ENCODE measurements at regions of chr14 and their contacts with region 1.

Region 1: GRCh38 chr14:95774265-95775160 is 60.6 kb upstream of the TCL1A start:
- DNase-seq: peak; percentile 46 to 57
- ATAC-seq: peak; percentile 70 to 80; a peak in 3 of 6 replicates
- H3K4me3 ChIP-seq: no peak overlapping the region
- H3K27ac ChIP-seq: no peak overlapping the region
- H3K4me1 ChIP-seq: no peaks in the 10 kb centered on the region
- CTCF ChIP-seq: peak; percentile 76
- EP300 ChIP-seq: no peak
- POLR2A ChIP-seq: no peak
- RAD21 ChIP-seq: peak; percentile 54 to 58; a peak in 4 of 5 replicates

Region 2: GRCh38 chr14:95759941-95760340 is 14.6 kb before region 1 on chr14:
- CTCF ChIA-PET with region 1: interaction called, 48 read pairs
- POLR2A ChIA-PET with region 1: no interaction called
- DNase-seq: no peak
- ATAC-seq: no peak
- H3K4me3 ChIP-seq: no peak overlapping the region
- H3K27ac ChIP-seq: no peak overlapping the region
- H3K4me1 ChIP-seq: no peaks in the 10 kb centered on the region
- CTCF ChIP-seq: no peak
- EP300 ChIP-seq: no peak
- POLR2A ChIP-seq: no peak
- RAD21 ChIP-seq: no peak

Region 3: DNA sequence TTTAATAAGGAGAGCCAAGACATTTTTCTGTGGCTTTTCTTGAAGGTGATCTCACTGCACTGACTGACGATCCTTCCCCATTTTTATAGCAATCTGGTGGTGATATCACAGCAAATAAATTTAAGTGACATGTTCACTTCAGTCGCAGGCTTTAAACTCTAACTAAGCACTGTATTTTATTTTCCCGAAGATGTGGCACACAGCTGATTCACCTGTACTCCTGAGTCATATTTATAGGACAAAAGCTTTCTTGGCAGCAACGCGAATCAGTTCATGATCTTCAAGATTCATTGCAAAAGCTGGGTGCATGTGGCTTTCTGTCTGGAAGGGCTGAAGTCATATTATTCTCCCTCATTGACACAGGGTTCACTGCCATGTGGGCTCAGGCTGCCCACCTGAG is 22.3 kb after region 1 on chr14:
- CTCF ChIA-PET with region 1: interaction called, 13 read pairs
- POLR2A ChIA-PET with region 1: no interaction called
- DNase-seq: no peak
- ATAC-seq: no peak
- H3K4me3 ChIP-seq: no peak overlapping the region
- H3K27ac ChIP-seq: no peak overlapping the region
- H3K4me1 ChIP-seq: no peaks in the 10 kb centered on the region
- CTCF ChIP-seq: no peak
- EP300 ChIP-seq: no peak
- POLR2A ChIP-seq: no peak
- RAD21 ChIP-seq: no peak

Region 4: DNA sequence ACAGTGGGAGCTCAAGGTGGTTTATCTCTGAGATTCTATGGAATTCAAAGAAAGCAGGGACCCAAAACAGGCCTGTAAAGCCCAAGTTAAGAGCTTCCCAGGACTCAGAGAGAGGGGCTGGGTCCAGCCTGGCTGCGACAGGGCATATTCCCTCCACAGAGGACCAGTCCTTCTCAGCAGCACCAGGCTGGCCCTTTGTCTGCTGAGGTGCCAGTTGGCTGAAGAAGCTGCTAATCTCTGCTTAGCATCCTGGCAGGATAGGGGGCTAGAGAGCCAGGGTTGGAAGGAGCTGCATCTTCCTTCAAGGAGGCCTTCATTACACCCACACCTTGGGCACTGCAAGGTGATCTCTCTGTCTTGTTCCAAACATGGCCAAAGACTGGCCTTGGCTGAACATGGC is 33.9 kb after region 1 on chr14:
- CTCF ChIA-PET with region 1: interaction called, 14 read pairs
- POLR2A ChIA-PET with region 1: no interaction called
- DNase-seq: no peak
- ATAC-seq: no peak
- H3K4me3 ChIP-seq: no peak overlapping the region
- H3K27ac ChIP-seq: no peak overlapping the region
- H3K4me1 ChIP-seq: no peaks in the 10 kb centered on the region
- CTCF ChIP-seq: no peak
- EP300 ChIP-seq: no peak
- POLR2A ChIP-seq: no peak
- RAD21 ChIP-seq: no peak

Measured in A549 (cell line).